HEK293 (cell line): ENCODE measurements at regions of chr4 and their contacts with region 1.

Region 1: GRCh38 chr4:1346781-1347409 is at the start of gene UVSSA:
- H3K4me3 ChIP-seq: peak within 1 kb of the TSS; percentile 70
- H3K27ac ChIP-seq: peak within 1 kb of the TSS; percentile 70
- H3K4me1 ChIP-seq: no peaks in the 10 kb centered on the region
- CTCF ChIP-seq: no peak

Region 2: GRCh38 chr4:1249148-1249730 is 97.7 kb before region 1 on chr4:
- CTCF ChIA-PET with region 1: interaction called, 5 read pairs
- POLR2A ChIA-PET with region 1: interaction called, 41 read pairs
- H3K4me3 ChIP-seq: peak overlapping the region; percentile 45
- H3K27ac ChIP-seq: peak overlapping the region; percentile 93
- H3K4me1 ChIP-seq: no peaks in the 10 kb centered on the region; the same call in 1 of the 2 replicates
- CTCF ChIP-seq: no peak

Region 3: GRCh38 chr4:1289207-1290164 is 57.4 kb before region 1 on chr4 and contains the start of gene MAEA:
- CTCF ChIA-PET with region 1: interaction called, 3 read pairs
- POLR2A ChIA-PET with region 1: interaction called, 12 read pairs
- H3K4me3 ChIP-seq: peak within 1 kb of the TSS; percentile 72
- H3K27ac ChIP-seq: peak within 1 kb of the TSS; percentile 69
- H3K4me1 ChIP-seq: peaks cover 3% of the 10 kb centered on the region; the same call in 1 of the 2 replicates
- CTCF ChIP-seq: no peak